IMR-90 (cell line): ENCODE measurements at regions of chr5 and their contacts with region 1.

Region 1: DNA sequence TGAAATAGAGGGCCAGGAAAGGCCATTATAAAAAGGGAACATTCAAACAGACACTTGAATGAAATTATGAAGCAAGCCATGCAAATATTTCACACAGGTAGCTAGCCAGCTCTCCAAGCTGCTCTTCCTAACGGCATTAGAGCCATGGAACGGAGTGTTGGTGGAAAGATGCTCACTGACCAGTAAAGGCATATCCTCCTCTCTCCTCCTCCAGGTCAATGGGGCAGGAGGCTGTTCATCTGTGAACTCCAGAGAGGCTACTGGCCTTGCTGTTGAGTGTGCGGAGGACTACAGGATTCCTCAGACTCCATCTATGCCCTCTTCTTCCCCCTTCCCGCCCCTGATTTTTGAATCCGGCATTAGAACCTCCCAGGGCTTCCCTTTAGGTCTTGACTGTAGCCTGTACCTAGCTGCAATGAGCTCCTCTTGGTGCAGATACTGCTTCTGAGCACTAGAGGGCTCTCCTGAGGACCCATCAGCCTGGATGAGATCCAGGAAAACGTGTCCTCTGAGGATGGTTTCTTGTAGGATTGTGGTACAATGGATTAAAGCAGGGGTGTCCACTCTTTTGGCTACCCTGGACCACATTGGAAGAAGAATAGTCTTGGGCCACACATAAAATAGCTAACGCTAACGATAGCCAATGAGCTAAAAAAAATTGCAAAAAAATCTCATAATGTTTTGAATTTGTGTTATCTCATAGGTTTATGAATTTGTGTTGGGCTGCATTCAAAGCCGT is 162.2 kb downstream of the SREK1 start:
- DNase-seq: peak; percentile 63
- ATAC-seq: peak; percentile 97
- H3K4me3 ChIP-seq: no peak overlapping the region
- H3K27ac ChIP-seq: no peak overlapping the region
- H3K4me1 ChIP-seq: no peaks in the 10 kb centered on the region
- H3K27me3 ChIP-seq: peaks cover 5% of the 10 kb centered on the region
- CTCF ChIP-seq: peak; percentile 80
- POLR2A ChIP-seq: no peak
- RAD21 ChIP-seq: peak; percentile 42

Region 2: GRCh38 chr5:66757188-66757833 is 451.0 kb after region 1 on chr5:
- CTCF ChIA-PET with region 1: interaction called, 5 read pairs
- POLR2A ChIA-PET with region 1: no interaction called
- dilution Hi-C with region 1: no loop called
- in situ Hi-C with region 1: loop called (anchors 10 kb)
- intact Hi-C with region 1: loop called (anchors 1 kb)
- DNase-seq: peak; percentile 44
- ATAC-seq: no peak
- H3K4me3 ChIP-seq: no peak overlapping the region
- H3K27ac ChIP-seq: no peak overlapping the region
- H3K4me1 ChIP-seq: no peaks in the 10 kb centered on the region
- H3K27me3 ChIP-seq: no peaks in the 10 kb centered on the region
- CTCF ChIP-seq: peak; percentile 38
- POLR2A ChIP-seq: no peak
- RAD21 ChIP-seq: peak; percentile 40

Region 3: DNA sequence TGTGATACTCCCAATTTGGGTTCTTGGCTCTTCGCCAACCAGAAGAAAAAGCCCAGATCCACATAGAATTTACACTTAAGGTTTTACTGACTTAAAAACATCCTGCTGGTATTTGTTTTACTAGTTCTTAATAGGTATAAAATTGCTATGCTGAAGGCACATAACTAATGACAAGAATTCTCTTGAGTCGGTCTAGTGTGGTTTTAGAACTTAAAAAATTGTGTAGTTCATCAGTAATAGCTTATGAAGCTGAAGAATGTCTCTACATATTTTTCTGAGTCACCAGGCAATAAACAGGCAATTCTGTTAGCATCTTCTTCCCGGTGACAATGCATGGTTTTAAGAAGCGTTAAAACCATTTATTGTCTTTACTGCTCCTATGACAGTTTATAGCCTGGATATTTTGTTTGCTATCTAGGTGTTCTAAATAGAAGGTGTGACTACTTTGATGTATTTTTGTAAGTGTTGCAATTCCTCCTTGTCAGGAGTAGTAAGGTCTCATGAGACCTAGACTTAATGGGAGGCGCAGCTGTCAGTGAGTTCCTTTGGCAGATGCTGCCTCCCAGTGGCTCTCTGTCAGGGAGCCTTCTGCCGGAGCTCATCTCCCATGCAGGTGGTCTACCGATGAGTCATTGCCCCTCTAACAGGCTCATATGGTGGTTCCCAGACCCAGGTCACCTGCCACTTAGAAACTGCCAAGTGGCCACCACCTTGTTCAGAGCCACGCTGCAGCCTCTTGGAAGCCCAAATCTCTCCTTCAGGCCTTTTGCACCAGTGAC is 463.8 kb after region 1 on chr5:
- CTCF ChIA-PET with region 1: interaction called, 3 read pairs
- POLR2A ChIA-PET with region 1: no interaction called
- dilution Hi-C with region 1: no loop called
- in situ Hi-C with region 1: loop called (anchors 10 kb)
- intact Hi-C with region 1: no loop called
- DNase-seq: no peak
- ATAC-seq: no peak
- H3K4me3 ChIP-seq: no peak overlapping the region
- H3K27ac ChIP-seq: no peak overlapping the region
- H3K4me1 ChIP-seq: no peaks in the 10 kb centered on the region
- H3K27me3 ChIP-seq: no peaks in the 10 kb centered on the region
- CTCF ChIP-seq: no peak
- POLR2A ChIP-seq: no peak
- RAD21 ChIP-seq: no peak

Region 4: GRCh38 chr5:66864331-66864840 is 558.1 kb after region 1 on chr5:
- CTCF ChIA-PET with region 1: no interaction called
- POLR2A ChIA-PET with region 1: no interaction called
- dilution Hi-C with region 1: no loop called
- in situ Hi-C with region 1: no loop called
- intact Hi-C with region 1: loop called (anchors 5 kb)
- DNase-seq: peak; percentile 47
- ATAC-seq: peak; percentile 64
- H3K4me3 ChIP-seq: no peak overlapping the region
- H3K27ac ChIP-seq: no peak overlapping the region
- H3K4me1 ChIP-seq: no peaks in the 10 kb centered on the region
- H3K27me3 ChIP-seq: peaks cover 12% of the 10 kb centered on the region
- CTCF ChIP-seq: peak; percentile 54
- POLR2A ChIP-seq: no peak
- RAD21 ChIP-seq: peak; percentile 57

Region 5: GRCh38 chr5:66952153-66952552 is 645.9 kb after region 1 on chr5:
- CTCF ChIA-PET with region 1: no interaction called
- POLR2A ChIA-PET with region 1: no interaction called
- dilution Hi-C with region 1: no loop called
- in situ Hi-C with region 1: no loop called
- intact Hi-C with region 1: loop called (anchors 5 kb)
- DNase-seq: no peak
- ATAC-seq: no peak
- H3K4me3 ChIP-seq: no peak overlapping the region
- H3K27ac ChIP-seq: no peak overlapping the region
- H3K4me1 ChIP-seq: no peaks in the 10 kb centered on the region
- H3K27me3 ChIP-seq: no peaks in the 10 kb centered on the region
- CTCF ChIP-seq: no peak
- POLR2A ChIP-seq: no peak
- RAD21 ChIP-seq: no peak